Heart right ventricle (tissue), 16 donors: ENCODE measurements at regions of chr2 and their contacts with region 1.

Region 1: DNA sequence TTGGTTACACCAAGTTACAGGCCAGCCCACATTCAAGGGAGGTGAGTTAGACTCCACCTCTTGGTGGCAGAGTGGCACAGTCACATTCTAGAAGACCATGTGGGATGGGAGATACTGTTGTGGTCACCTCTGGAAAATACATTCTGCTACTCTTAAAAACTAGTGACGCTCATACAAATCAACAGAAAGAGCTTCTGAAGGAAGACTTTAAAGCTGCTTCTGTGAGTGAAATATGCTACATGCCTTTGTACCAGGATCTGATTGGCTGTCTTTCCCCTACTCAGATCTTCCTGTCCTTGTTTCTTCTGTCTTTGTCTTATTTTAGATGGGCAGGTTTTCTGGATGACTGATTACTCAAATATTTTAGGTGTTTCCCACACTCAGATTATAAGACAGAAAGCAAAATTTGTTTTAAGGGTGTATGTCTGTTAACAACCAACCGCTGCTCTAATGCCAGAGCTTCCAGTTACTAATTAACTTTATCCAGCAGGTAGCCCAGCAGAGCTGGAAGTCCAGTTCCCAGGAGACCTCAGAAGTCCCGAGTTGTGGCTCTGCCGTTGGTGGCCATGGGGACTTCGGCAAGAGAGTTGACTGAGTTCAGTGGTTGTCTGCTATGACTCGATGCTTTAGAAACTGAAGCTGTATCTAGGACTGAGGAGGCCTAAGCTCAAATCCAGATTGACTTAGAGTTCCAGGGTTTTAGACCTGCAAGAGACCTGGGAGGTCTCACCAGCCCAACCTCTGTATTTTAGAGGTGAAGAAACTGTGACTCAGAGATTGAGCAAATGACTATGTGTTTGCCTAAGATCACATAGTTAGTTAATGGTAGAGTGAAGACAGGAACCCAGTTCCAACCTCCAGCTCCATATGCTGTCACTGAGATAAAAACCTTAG is 7.4 kb downstream of the IL1R2 start:
- DNase-seq: no peak
- ATAC-seq: no peak
- H3K4me3 ChIP-seq: no peak overlapping the region
- H3K27ac ChIP-seq: no peak overlapping the region
- H3K4me1 ChIP-seq: peaks cover 0 to 6% (median 3%) of the 10 kb centered on the region in 9 donors
- H3K27me3 ChIP-seq: peaks cover 0 to 3% (median 0%) of the 10 kb centered on the region in 7 donors
- CTCF ChIP-seq: no peak

Region 2: GRCh38 chr2:101883863-101884262 is 115.3 kb before region 1 on chr2:
- intact Hi-C with region 1: loop called in 1 of 10 experiments (anchors 10 kb)
- DNase-seq: no peak
- ATAC-seq: peak; percentile 29 to 82 (median 62)
- H3K4me3 ChIP-seq: no peak overlapping the region
- H3K27ac ChIP-seq: peak overlapping the region in 1 of 10 donors; percentile 27
- H3K4me1 ChIP-seq: peaks cover 0 to 42% (median 30%) of the 10 kb centered on the region in 9 donors
- H3K27me3 ChIP-seq: no peaks in the 10 kb centered on the region
- CTCF ChIP-seq: peak; percentile 24 to 68 (median 57)